Activated CD4-positive, alpha-beta T cell treated with anti-CD3 and anti-CD28 coated beads for 36 hours (primary cell): ENCODE measurements at regions of chr1 and their contacts with region 1.

Region 1: DNA sequence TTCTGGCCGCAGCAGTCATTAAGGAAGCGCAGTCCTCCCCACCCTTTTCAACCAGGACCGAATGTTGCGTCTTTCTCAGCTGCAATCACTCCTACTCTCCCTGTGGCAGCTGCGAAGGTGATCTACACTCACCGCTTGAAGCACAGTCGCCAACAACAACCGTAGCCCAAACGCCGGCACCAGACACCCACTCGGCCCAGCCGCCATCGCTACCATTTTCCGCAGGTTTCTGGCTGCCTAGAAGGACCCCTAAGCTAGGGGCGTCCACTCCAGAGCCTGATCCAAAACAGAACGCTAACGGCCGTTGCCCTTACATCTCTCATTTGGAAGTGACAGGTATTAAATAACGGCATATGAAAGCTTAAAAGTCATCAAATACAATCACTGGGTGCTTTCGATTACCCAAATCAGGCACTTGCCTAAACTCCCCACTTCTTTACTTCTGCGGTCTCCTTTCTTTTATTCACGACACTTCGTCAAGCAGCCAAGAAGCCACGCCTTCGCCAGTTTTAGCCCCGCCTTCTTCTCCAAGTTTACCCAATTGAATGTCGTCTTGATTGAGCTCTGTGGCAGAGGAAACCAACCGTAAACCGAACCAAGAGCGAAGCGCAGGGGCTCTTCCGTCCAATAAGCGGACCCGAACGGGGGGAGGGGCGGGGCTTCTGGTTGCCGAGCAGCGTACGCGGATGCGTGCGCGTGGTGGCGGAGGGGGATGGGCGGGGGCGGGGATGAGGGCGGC is at the start of gene SELENOF:
- DNase-seq: peak; percentile 99
- ATAC-seq: peak; percentile 94
- H3K4me3 Mint-ChIP-seq: no peak within 1 kb of the TSS
- H3K27ac Mint-ChIP-seq: no peak within 1 kb of the TSS
- H3K4me1 Mint-ChIP-seq: peaks cover 39% of the 10 kb centered on the region
- H3K27me3 Mint-ChIP-seq: no peaks in the 10 kb centered on the region
- total RNA-seq, gene SELENOF: 140 to 141 TPM

Region 2: DNA sequence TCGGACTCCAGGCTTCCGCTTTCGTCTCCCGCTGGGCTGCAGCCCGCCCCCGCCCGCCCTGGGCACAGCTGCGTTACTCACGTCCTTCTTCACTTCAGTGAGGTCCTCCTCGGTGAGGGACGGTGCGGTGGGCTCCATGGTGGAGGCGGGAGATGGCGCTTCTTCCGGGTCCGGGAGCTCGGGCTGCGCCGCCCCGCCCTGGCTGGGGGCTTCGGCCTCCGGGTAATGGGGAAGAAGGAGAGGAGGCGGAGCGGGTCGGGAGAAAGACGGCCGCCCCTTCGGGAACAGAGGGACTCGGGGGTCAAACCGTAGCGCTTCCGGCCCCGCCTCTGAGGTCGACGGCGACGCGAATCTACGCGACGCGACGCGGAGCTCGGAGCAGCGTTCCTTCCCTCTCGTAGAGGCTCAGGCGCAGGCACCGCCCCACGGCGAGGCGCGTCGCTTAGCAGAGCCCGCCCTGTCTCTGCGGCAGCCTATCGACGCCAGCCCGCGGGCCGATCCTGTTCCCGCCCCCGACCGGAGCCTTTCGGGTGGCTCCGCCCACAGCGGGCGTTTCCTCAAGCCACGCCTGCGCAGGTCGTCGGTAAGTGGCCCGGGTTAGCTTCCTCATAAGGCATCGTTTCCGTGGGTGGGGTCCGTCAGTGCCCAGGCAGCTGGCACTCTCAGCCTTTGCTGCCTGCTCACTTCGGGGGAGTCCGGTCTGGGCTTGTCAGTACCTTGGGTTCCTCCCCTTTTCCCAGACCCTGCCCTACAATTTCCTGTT is 1637.7 kb before region 1 on chr1 and contains the start of gene BCL10:
- CTCF ChIA-PET with region 1: no interaction called
- POLR2A ChIA-PET with region 1: no interaction called
- intact Hi-C with region 1: loop called in 1 of 2 experiments (anchors 5 kb)
- DNase-seq: peak; percentile 99
- ATAC-seq: peak; percentile 97
- H3K4me3 Mint-ChIP-seq: peak within 1 kb of the TSS; percentile 84
- H3K27ac Mint-ChIP-seq: peak within 1 kb of the TSS; percentile 94
- H3K4me1 Mint-ChIP-seq: peaks cover 52% of the 10 kb centered on the region
- H3K27me3 Mint-ChIP-seq: peaks cover 4% of the 10 kb centered on the region
- total RNA-seq, gene BCL10: 28.3 to 28.8 TPM

Region 3: DNA sequence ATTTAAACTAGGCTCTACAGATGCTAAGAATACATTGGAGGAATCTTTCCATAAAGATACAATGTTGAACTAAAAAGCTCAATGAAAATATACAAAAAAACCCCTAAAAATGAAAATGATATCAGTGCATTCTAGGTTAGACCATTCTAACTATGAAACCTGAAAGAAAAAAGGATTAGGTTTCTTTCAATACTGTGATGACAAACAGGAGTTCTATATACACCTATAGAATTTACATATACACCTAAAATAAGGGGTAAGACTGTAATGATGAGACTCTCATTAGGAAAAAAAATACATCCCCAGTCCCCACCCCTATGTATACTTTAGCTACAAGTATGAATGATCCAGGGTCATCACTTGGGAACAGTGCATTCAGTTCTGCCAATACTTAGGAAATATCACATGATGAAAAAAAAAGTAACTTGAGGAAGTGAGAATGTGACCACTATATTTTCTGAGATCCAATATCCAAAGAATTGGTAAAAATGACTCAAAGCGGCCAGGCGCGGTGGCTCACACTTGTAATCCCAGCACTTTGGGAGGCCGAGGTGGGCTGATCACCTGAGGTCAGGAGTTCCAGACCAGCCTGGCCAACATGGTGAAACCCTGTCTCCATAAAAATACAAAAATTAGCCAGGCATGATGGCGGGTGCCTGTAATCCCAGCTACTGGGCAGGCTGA is 26.4 kb before region 1 on chr1:
- CTCF ChIA-PET with region 1: interaction called, 5 read pairs
- POLR2A ChIA-PET with region 1: no interaction called
- intact Hi-C with region 1: loop called in 1 of 2 experiments (anchors 2 kb)
- DNase-seq: no peak
- ATAC-seq: peak; percentile 71
- H3K4me3 Mint-ChIP-seq: no peak overlapping the region
- H3K27ac Mint-ChIP-seq: no peak overlapping the region
- H3K4me1 Mint-ChIP-seq: peaks cover 26% of the 10 kb centered on the region
- H3K27me3 Mint-ChIP-seq: no peaks in the 10 kb centered on the region

Region 4: GRCh38 chr1:86998727-86999126 is 84.7 kb after region 1 on chr1:
- CTCF ChIA-PET with region 1: no interaction called
- POLR2A ChIA-PET with region 1: no interaction called
- intact Hi-C with region 1: no loop called
- DNase-seq: no peak
- ATAC-seq: peak; percentile 78
- H3K4me3 Mint-ChIP-seq: no peak overlapping the region
- H3K27ac Mint-ChIP-seq: no peak overlapping the region
- H3K4me1 Mint-ChIP-seq: peaks cover 16% of the 10 kb centered on the region
- H3K27me3 Mint-ChIP-seq: no peaks in the 10 kb centered on the region

Region 5: GRCh38 chr1:87045761-87046304 is 131.8 kb after region 1 on chr1:
- CTCF ChIA-PET with region 1: interaction called, 8 read pairs
- POLR2A ChIA-PET with region 1: interaction called, 18 read pairs
- intact Hi-C with region 1: loop called (anchors 1 kb)
- DNase-seq: peak; percentile 80
- ATAC-seq: peak; percentile 81
- H3K4me3 Mint-ChIP-seq: peak overlapping the region; percentile 57
- H3K27ac Mint-ChIP-seq: peak overlapping the region; percentile 94
- H3K4me1 Mint-ChIP-seq: peaks cover 58% of the 10 kb centered on the region
- H3K27me3 Mint-ChIP-seq: no peaks in the 10 kb centered on the region

Region 6: GRCh38 chr1:87084244-87084836 is 170.3 kb after region 1 on chr1:
- CTCF ChIA-PET with region 1: interaction called, 21 read pairs
- POLR2A ChIA-PET with region 1: no interaction called
- intact Hi-C with region 1: loop called (anchors 2 kb)
- DNase-seq: no peak
- ATAC-seq: peak; percentile 30
- H3K4me3 Mint-ChIP-seq: no peak overlapping the region
- H3K27ac Mint-ChIP-seq: no peak overlapping the region
- H3K4me1 Mint-ChIP-seq: peaks cover 13% of the 10 kb centered on the region
- H3K27me3 Mint-ChIP-seq: no peaks in the 10 kb centered on the region

Region 7: DNA sequence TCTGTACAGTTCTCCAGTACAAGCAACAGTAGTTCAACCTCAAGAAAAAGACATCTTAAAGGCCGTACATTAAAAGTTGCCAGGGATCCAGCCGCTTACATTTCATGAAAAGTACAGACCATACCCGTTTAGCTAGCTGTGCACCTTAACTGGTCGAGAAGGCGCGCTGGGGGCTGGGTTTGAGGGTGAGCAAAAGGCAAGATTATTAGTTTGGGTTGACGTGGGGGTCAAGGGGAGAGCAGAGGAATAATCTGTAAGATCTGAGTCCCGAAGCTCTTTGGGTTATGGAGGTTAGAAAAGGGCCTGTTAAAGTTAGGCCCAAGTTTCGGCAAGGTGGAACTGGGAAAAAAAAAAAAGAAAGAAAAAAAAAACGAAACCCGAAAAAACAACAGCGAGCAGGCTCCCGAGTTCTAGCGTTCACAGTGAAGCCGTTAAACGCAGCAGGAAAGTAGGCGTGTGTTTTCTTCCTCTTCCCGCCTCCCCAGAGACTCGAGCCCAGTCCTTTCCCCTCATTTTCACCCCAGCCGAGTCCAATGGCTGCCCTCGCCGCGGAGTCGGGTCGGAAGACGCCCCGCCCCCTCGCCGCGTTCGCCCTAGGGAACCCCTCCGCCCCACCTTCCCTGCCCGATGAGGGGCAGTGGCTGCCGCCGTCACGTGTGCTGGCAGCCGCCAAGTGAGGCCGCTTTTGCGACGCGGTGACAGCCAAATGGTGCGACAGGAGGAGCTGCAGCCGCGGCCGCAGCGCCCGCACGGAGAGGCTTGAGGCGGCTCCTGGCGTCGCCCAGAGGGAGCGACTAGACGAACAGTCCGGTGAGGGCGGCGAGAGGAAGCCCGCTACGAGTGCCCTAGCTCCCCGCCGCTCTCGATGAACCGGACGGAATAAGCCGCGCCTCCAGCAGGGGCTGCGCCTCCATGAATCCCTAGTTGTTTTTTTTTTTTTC is 1769.7 kb after region 1 on chr1 and contains the start of gene PKN2:
- CTCF ChIA-PET with region 1: no interaction called
- POLR2A ChIA-PET with region 1: no interaction called
- intact Hi-C with region 1: loop called (anchors 1 to 2 kb)
- DNase-seq: peak; percentile 99
- ATAC-seq: peak; percentile 96
- H3K4me3 Mint-ChIP-seq: peak within 1 kb of the TSS; percentile 94
- H3K27ac Mint-ChIP-seq: peak within 1 kb of the TSS; percentile 99
- H3K4me1 Mint-ChIP-seq: peaks cover 21% of the 10 kb centered on the region
- H3K27me3 Mint-ChIP-seq: no peaks in the 10 kb centered on the region
- total RNA-seq, gene PKN2: 16.4 to 24.9 TPM